Transverse colon (tissue), 4 donors: ENCODE measurements at regions of chr2 and their contacts with region 1.

Region 1: DNA sequence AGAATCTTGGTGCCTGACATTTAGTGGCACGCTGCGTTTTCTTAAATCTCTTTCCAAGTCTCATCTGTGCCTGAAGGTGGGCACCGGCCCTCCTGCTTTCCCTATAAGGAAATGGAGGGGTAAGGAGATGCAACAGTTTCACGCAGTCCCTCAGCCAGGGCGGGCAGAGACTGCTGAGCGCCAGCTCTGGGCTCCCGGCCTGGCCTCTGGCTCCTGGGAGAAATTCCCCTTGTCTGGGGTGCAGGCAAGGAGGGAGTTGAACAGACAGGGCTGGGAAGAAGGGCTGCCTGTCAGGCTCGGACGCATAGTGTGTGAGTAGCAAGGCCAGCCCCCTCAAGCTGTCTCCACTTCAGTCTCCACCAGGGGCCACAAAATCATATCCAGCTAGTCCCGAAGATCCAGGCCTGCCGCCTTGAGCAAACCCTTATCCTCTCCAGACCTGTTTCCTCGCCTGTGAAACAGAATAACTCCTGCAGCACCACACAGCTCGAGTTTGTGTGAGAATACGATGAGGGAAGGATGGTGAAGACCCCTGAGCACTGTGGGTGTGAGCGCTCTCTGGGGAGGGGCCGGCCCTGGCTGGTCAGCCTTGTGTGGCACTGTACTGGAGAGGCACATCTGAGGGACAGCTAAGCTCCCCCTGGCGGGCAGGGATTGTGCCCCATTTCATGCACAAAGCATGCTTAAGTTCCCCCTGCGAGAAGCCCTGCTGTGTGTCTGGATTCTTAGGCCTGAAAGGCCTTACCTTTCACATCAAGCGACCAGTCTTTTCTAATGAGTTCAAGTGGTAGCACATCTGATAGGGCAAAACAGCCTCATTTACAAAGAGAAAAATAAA is 33.8 kb downstream of the SDC1 start:
- DNase-seq: peak; percentile 73
- H3K4me3 ChIP-seq: no peak overlapping the region
- H3K27ac ChIP-seq: peak overlapping the region in 1 of 4 donors; percentile 48
- H3K4me1 ChIP-seq: peaks cover 7 to 29% (median 20%) of the 10 kb centered on the region in 4 donors
- H3K27me3 ChIP-seq: no peaks in the 10 kb centered on the region
- CTCF ChIP-seq: peak in 2 of 5 experiments; percentile 50 to 62
- EP300 ChIP-seq: no peak
- POLR2A ChIP-seq: no peak

Region 2: GRCh38 chr2:21498016-21498415 is 1306.9 kb after region 1 on chr2:
- in situ Hi-C with region 1: no loop called
- intact Hi-C with region 1: loop called (anchors 5 kb)
- DNase-seq: no peak
- H3K4me3 ChIP-seq: no peak overlapping the region
- H3K27ac ChIP-seq: no peak overlapping the region
- H3K4me1 ChIP-seq: no peaks in the 10 kb centered on the region
- H3K27me3 ChIP-seq: no peaks in the 10 kb centered on the region
- CTCF ChIP-seq: no peak
- EP300 ChIP-seq: no peak
- POLR2A ChIP-seq: no peak